ENCODE measurements at regions of chr6 and their contacts with region 1.

Region 1: DNA sequence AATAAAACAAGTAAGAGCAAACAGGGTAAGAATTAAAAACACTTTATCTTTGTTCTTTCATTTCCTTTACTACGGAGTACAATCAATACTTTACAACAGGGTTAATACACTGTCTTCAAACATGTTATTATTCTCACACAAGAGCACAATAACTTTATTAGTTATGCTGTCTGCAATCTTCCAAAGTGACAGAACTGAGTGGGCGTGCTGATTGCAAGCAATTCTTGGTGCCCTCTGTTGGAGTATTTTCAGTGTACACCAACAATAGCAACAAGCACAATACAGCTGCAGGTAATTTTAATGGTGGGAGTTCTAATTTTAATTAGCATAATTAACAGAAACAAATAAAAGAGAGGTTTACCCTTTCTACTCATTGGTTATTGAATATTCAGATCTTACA is 33.9 kb upstream of the PTPRK start:
- DNase-seq: no peak

Region 2: GRCh38 chr6:128672023-128672422 is 117.7 kb after region 1 on chr6:
- intact Hi-C with region 1: no loop called
- DNase-seq: no peak

Region 3: DNA sequence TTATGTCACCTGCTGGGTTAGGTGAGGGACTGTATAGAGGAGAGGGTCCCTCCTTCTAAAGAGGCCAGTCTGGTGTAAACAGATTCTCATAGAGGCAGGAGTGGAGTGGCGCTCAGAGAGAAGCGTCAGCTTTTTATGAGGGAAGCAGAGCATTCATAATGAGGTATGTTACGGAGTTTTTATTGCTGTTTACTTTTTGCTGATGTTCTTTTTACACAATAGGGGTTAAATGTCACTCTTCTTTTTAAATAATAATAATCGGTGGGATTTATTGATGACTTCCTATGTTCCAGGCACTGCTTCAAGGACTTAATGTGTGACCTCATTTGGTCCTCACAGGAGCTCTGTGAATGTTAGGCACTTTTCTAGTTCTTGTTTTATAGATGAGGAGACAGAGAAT is 1544.0 kb after region 1 on chr6:
- intact Hi-C with region 1: loop called in 1 of 2 experiments (anchors 5 kb)
- DNase-seq: no peak

Measured in posterior vena cava (tissue), 2 donors.